PC-9 (cell line): ENCODE measurements at regions of chr2 and their contacts with region 1.

Region 1: GRCh38 chr2:223860809-223861738 is 23.7 kb upstream of the AP1S3 start:
- DNase-seq: peak; percentile 92 to 98
- H3K4me3 ChIP-seq: no peak overlapping the region; the same call in 1 of the 2 replicates
- H3K27ac ChIP-seq: peak overlapping the region; percentile 85
- H3K4me1 ChIP-seq: peaks cover 51% of the 10 kb centered on the region
- H3K27me3 ChIP-seq: no peaks in the 10 kb centered on the region
- CTCF ChIP-seq: peak; percentile 67

Region 2: DNA sequence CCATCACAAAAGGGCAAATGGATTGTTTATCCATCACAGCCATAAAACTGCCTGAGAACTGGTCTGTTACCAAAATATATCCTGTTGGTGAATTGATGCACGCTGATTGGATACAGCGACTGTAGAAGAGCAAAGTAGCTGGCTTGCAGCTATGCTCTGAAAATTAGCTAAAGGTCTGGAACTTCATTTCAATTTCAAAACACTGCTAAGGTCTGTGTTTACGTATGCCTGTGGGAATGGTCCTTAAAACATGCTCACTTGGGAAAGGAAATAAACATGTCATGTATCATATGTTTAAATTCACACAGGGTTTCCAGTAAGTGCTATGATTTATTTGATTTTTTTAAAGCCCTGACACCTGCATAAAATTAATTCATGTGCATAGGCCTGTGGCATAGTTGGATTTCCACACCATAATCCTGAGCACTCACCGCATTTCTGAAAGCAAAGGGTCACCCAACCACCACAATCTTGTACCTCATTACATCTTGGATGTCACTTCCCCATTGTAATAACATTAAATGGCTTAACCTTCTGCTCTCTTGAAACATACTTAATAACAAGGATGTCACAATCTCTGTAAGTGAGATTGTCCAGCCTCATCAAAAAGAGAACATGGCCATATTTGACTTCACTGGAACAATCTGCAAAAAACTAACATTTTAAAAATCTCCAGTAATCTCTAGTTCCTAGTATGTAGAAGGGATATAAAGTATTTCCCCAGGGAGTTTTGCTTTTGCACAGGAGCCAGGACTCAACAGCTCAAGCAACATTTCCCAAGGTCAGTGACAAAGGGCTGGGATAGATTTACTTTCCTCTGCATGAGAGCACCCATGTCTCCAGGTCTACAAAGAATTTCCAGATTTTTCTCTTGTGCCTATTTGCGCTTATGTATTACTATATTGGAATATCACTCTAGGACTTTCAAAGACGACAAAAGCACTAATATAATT is 1315.0 kb before region 1 on chr2:
- CTCF ChIA-PET with region 1: no interaction called
- POLR2A ChIA-PET with region 1: no interaction called
- intact Hi-C with region 1: no loop called
- DNase-seq: no peak
- H3K4me3 ChIP-seq: no peak overlapping the region
- H3K27ac ChIP-seq: no peak overlapping the region
- H3K4me1 ChIP-seq: no peaks in the 10 kb centered on the region
- H3K27me3 ChIP-seq: no peaks in the 10 kb centered on the region
- CTCF ChIP-seq: no peak

Region 3: DNA sequence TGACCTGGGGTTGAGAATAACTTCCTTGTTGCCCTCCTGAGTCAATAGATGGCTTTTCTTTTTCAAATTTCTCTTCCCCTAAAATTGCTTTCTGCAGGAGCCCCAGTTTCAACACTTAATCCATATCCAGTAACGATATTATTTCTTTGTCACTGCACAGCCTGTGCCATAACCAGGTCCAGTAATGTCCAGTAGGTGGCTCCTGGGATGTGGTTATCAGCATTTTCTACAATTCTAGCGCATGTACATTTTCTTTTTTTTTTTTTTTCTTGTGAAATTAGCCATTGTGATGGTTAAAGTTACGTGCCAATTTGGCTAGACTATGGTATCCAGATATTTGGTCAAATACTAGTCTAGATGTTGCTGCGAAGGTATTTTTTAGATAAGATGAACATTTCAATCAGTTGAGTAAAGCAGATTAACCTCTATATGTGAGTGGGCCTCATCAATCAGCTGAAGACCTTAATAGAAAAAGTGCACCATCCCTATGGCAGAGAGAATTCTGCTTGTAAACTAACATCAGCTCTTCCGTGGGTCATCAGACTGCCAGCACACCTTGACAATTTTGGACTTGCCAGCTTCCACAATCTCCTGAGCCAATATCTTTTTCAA is 186.0 kb before region 1 on chr2:
- CTCF ChIA-PET with region 1: no interaction called
- POLR2A ChIA-PET with region 1: no interaction called
- intact Hi-C with region 1: loop called (anchors 5 kb)
- DNase-seq: peak; percentile 50 to 64
- H3K4me3 ChIP-seq: no peak overlapping the region
- H3K27ac ChIP-seq: no peak overlapping the region
- H3K4me1 ChIP-seq: no peaks in the 10 kb centered on the region
- H3K27me3 ChIP-seq: no peaks in the 10 kb centered on the region
- CTCF ChIP-seq: peak; percentile 94

Region 4: DNA sequence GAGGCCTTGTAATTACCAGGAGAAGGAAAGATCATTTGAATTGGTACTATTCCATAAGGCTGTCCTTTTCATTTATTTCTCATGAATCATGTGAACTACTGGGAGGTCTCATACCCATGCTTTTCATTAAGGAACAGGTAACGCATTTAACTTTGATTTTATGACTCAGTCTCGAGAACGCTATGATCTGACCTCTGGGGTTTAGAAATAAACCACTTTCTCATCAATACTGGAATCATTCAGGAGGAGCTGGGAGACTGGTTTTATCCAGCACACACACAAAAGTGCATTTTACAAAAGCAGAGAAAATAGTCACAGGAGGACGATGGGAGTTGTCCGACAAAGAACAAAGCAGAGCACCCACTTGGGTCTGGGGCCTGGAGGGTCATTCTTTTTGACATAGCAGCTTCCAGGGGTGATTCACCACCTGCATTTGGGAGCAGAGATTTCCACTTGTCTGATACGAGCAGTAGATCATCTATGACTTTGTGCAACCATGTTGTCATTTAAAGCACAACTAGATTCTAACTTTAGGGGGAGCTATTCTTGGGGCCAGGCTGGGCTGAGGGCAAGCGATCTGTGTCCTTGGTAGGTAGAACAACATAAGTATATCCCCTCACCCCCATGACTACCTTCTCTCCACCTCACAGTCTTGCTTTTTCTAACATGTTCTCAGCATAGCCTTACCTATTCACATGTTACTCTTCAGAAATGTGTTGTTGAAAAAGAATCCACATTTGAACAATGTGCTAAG is 163.0 kb before region 1 on chr2:
- CTCF ChIA-PET with region 1: no interaction called
- POLR2A ChIA-PET with region 1: no interaction called
- intact Hi-C with region 1: no loop called
- DNase-seq: no peak
- H3K4me3 ChIP-seq: no peak overlapping the region
- H3K27ac ChIP-seq: peak overlapping the region; percentile 45; the same call in 1 of the 2 replicates
- H3K4me1 ChIP-seq: peaks cover 33% of the 10 kb centered on the region
- H3K27me3 ChIP-seq: no peaks in the 10 kb centered on the region
- CTCF ChIP-seq: no peak

Region 5: GRCh38 chr2:223779877-223780276 is 81.2 kb before region 1 on chr2:
- CTCF ChIA-PET with region 1: interaction called, 4 read pairs
- POLR2A ChIA-PET with region 1: interaction called, 6 read pairs
- intact Hi-C with region 1: loop called (anchors 2 kb)
- DNase-seq: peak; percentile 58 to 69
- H3K4me3 ChIP-seq: no peak overlapping the region
- H3K27ac ChIP-seq: no peak overlapping the region
- H3K4me1 ChIP-seq: no peaks in the 10 kb centered on the region
- H3K27me3 ChIP-seq: no peaks in the 10 kb centered on the region
- CTCF ChIP-seq: peak; percentile 84

Region 6: DNA sequence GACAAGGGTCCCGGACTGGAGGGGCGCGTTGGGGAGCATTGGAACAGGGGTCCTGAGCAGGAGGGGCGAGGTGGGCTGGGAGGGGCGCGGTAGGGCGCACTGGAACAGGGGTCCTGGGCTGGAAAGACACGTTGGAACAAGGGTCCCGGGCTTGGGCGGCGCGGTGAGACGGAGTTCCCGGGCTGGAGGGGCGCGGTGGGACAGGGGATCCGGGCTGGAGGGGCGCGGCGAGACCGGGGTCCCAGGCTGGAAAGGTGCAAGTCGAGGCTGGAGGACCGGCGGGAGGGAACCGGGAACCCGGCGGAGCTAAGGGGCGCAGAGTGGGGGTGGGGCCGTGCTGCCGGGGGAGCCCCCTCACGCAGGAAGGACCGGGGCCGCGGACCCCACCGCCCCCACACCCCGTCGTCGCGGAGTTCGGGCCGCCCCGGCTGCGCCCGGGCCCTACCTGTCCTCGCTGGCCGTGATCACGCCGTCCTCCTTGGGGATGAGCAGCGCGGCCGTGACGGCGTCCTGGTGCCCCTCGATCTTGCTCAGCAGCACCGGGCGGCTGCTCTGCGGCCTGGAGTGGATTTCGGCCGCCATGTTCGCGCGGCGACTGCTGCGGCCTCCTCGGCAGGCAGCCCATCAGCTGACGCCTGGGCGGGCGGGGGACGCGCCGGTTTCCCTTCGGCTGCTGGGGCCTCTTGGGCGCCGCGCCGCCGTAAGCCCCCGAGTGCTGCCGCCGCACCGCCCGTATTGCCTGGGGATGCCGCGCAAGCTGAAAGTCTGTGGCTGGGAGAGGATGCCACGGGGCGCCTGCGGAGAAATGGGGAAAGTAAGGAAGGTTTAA is 83.8 kb after region 1 on chr2 and contains the start of gene WDFY1:
- CTCF ChIA-PET with region 1: interaction called, 9 read pairs
- POLR2A ChIA-PET with region 1: interaction called, 3 read pairs
- intact Hi-C with region 1: loop called (anchors 2 kb)
- DNase-seq: peak; percentile 77 to 94
- H3K4me3 ChIP-seq: peak within 1 kb of the TSS; percentile 74
- H3K27ac ChIP-seq: 0 out of 2 replicates have a peak within 1 kb of the TSS, but pooled peaks have one; percentile 1
- H3K4me1 ChIP-seq: peaks cover 42% of the 10 kb centered on the region
- H3K27me3 ChIP-seq: no peaks in the 10 kb centered on the region
- CTCF ChIP-seq: no peak
- total RNA-seq, gene WDFY1: 81.9 and 84.4 TPM in 2 replicates

Region 7: DNA sequence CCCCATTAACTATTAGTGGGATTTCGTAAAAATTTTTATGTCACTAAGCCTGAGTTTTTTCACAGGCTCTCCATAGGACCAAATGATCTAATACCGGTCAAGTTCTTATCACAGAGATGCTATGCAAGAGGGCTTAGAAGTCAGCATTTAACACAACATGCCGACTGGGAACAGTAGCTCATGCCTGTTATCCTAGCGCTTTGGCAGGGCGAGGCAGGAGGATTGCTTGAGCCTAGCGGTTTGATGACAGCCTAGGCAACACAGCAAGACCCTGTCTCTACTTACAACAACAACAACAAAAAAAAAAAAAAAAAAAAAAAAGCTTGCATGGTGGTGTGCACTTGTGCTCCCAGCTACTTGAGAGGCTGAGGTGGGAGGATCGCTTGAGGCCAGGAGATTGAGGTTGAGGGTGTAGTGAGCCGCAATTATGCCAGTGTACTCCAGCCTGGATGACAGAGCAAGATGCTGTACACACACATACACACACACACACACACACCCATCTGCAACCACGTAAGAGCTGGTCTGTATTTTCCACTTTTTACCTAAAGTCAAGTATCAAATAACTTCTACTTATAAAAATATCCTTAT is 608.4 kb after region 1 on chr2:
- CTCF ChIA-PET with region 1: no interaction called
- POLR2A ChIA-PET with region 1: interaction called, 24 read pairs
- intact Hi-C with region 1: no loop called
- DNase-seq: no peak
- H3K4me3 ChIP-seq: no peak overlapping the region
- H3K27ac ChIP-seq: no peak overlapping the region
- H3K4me1 ChIP-seq: no peaks in the 10 kb centered on the region
- H3K27me3 ChIP-seq: no peaks in the 10 kb centered on the region
- CTCF ChIP-seq: no peak